ENCODE measurements at regions of chr3 and their contacts with region 1.

Region 1: DNA sequence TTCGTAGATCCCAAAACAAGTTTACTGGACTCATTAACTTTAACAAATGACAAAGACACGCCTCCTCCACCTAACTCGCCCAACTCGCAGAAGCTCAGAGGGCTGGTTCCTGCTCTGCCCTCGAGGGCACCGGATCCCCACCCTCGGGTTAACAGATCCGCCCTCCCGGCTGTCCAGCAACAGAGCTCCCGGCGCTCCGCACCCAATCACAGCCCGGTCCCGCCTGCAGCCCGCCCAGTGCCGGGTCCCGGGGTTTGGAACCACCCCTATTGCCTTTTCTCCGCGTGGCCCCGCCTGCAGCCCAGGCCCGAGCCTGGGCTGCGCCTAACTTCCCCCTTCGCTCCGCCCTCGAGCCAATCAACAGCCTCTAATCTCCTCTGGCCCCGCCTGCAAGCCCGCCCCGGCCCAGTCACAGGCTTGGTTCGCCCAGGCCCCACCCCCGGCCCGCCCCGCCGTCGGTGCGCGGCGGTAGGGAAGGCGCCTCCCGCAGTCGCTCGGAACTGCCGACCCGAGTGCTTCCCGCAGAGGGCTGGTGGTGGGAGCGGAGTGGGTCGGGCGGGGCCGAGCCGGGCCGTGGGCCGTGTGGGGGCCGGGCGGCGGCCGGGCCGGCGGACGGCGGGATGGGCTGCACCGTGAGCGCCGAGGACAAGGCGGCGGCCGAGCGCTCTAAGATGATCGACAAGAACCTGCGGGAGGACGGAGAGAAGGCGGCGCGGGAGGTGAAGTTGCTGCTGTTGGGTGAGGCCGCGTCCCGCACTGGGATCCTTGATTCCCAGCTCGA is at the start of gene GNAI2:
- DNase-seq: peak; percentile 99
- ATAC-seq: peak; percentile 87
- H3K4me3 ChIP-seq: peak within 1 kb of the TSS; percentile 78
- H3K27ac ChIP-seq: peak within 1 kb of the TSS; percentile 55; the same call in 1 of the 2 replicates
- H3K4me1 ChIP-seq: peaks cover 15% of the 10 kb centered on the region
- H3K27me3 ChIP-seq: no peaks in the 10 kb centered on the region
- CTCF ChIP-seq: no peak
- total RNA-seq, gene GNAI2: 221 and 254 TPM in 2 replicates

Region 2: GRCh38 chr3:49295489-49296058 is 940.3 kb before region 1 on chr3:
- CTCF ChIA-PET with region 1: no interaction called
- POLR2A ChIA-PET with region 1: no interaction called
- intact Hi-C with region 1: no loop called
- DNase-seq: peak; percentile 65
- ATAC-seq: peak; percentile 31; the same call in 1 of the 2 replicates
- H3K4me3 ChIP-seq: no peak overlapping the region
- H3K27ac ChIP-seq: no peak overlapping the region
- H3K4me1 ChIP-seq: no peaks in the 10 kb centered on the region
- H3K27me3 ChIP-seq: no peaks in the 10 kb centered on the region
- CTCF ChIP-seq: peak; percentile 90

Region 3: GRCh38 chr3:49939858-49940666 is 295.8 kb before region 1 on chr3 and contains the start of gene RBM6:
- CTCF ChIA-PET with region 1: interaction called, 20 read pairs
- POLR2A ChIA-PET with region 1: no interaction called
- intact Hi-C with region 1: no loop called
- DNase-seq: peak; percentile 96
- ATAC-seq: peak; percentile 98
- H3K4me3 ChIP-seq: peak within 1 kb of the TSS; percentile 91
- H3K27ac ChIP-seq: peak within 1 kb of the TSS; percentile 82
- H3K4me1 ChIP-seq: peaks cover 4% of the 10 kb centered on the region
- H3K27me3 ChIP-seq: no peaks in the 10 kb centered on the region
- CTCF ChIP-seq: no peak
- total RNA-seq, gene RBM6: 64.6 and 73.5 TPM in 2 replicates

Region 4: GRCh38 chr3:50150808-50151686 is 84.9 kb before region 1 on chr3:
- CTCF ChIA-PET with region 1: no interaction called
- POLR2A ChIA-PET with region 1: no interaction called
- intact Hi-C with region 1: no loop called
- DNase-seq: no peak
- ATAC-seq: no peak
- H3K4me3 ChIP-seq: no peak overlapping the region
- H3K27ac ChIP-seq: no peak overlapping the region
- H3K4me1 ChIP-seq: peaks cover 6% of the 10 kb centered on the region; the same call in 1 of the 2 replicates
- H3K27me3 ChIP-seq: no peaks in the 10 kb centered on the region
- CTCF ChIP-seq: no peak

Region 5: DNA sequence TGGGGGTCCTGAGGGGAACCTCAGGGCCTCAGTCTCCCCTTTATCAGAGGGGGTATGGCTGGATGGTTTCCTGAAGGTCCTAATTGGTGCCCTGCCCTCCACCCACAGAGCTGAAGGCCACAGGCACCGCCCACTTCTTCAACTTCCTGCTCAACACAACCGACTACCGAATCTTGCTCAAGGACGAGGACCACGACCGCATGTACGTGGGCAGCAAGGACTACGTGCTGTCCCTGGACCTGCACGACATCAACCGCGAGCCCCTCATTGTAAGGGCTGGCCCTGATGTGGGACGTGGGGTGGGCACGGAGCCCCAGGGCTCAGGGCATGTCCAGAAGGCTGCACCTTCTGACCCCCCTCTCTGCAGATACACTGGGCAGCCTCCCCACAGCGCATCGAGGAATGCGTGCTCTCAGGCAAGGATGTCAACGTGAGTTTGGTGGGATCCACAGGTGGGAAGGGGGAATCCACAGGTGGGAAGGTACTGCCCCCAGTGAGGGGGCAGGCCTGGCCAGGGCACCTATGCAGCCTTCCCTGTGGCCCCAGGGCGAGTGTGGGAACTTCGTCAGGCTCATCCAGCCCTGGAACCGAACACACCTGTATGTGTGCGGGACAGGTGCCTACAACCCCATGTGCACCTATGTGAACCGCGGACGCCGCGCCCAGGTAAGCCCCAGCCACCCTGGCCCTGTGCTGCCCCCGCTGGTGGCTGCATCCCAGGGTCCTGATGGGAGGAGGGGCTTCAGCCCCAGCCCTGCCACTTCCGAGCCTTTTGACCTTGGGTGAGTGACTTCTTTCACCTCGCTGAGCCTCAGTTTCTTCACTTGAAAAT is 62.0 kb before region 1 on chr3:
- CTCF ChIA-PET with region 1: no interaction called
- POLR2A ChIA-PET with region 1: no interaction called
- intact Hi-C with region 1: no loop called
- DNase-seq: no peak
- ATAC-seq: no peak
- H3K4me3 ChIP-seq: no peak overlapping the region
- H3K27ac ChIP-seq: no peak overlapping the region
- H3K4me1 ChIP-seq: peaks cover 40% of the 10 kb centered on the region
- H3K27me3 ChIP-seq: no peaks in the 10 kb centered on the region
- CTCF ChIP-seq: 0 out of 2 replicates have a peak, but pooled peaks have one; percentile 36

Region 6: DNA sequence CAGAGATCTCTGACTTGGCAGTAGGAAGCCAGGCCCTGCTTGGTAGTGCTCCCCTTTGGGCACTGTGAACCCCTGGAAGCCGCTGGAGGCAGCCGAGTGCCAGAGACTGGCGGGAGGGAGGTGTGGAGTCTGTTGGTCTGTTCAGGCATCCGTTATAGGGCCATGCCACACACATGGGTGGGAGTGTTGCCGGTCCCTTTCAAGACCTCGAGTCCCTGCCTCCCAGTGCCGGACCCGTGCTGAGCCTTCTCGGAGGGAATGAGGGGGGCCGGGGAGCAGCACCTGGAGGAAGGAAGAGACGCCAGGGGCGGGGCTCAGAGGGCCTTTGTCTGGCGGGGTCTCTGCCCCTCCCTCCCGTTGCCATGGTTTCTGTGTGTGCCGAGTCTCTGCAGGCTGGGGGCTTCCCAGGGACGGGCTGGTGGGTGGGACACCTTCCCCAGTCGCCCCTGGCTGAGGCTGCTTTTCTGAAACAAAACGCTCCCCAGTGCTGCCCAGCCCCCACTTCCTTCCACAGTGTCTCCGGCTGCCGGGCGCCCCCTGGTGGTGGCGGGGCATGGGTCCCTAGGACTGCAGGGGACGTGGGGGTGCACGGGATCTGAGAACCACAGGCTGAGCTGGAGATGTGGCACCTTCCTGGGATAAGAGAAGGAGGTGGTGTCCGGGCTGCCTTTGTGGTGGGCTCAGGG is 10.1 kb after region 1 on chr3:
- CTCF ChIA-PET with region 1: interaction called, 19 read pairs
- POLR2A ChIA-PET with region 1: interaction called, 9 read pairs
- intact Hi-C with region 1: no loop called
- DNase-seq: peak; percentile 89
- ATAC-seq: peak; percentile 74
- H3K4me3 ChIP-seq: peak overlapping the region; percentile 37; the same call in 1 of the 2 replicates
- H3K27ac ChIP-seq: peak overlapping the region; percentile 78
- H3K4me1 ChIP-seq: peaks cover 49% of the 10 kb centered on the region
- H3K27me3 ChIP-seq: no peaks in the 10 kb centered on the region
- CTCF ChIP-seq: peak; percentile 99

Region 7: GRCh38 chr3:50298836-50299637 is 63.1 kb after region 1 on chr3 and contains the starts of genes HYAL3 and NAA80:
- CTCF ChIA-PET with region 1: no interaction called
- POLR2A ChIA-PET with region 1: no interaction called
- intact Hi-C with region 1: loop called (anchors 2 kb)
- DNase-seq: peak; percentile 99
- ATAC-seq: peak; percentile 86
- H3K4me3 ChIP-seq: peak within 1 kb of the TSS; percentile 94
- H3K27ac ChIP-seq: peak within 1 kb of the TSS; percentile 90
- H3K4me1 ChIP-seq: peaks cover 20% of the 10 kb centered on the region
- H3K27me3 ChIP-seq: no peaks in the 10 kb centered on the region
- CTCF ChIP-seq: peak; percentile 36; the same call in 1 of the 2 replicates
- total RNA-seq, gene HYAL3: 13.2 and 20.8 TPM in 2 replicates
- total RNA-seq, gene NAA80: 8.7 and 16.6 TPM in 2 replicates

Region 8: DNA sequence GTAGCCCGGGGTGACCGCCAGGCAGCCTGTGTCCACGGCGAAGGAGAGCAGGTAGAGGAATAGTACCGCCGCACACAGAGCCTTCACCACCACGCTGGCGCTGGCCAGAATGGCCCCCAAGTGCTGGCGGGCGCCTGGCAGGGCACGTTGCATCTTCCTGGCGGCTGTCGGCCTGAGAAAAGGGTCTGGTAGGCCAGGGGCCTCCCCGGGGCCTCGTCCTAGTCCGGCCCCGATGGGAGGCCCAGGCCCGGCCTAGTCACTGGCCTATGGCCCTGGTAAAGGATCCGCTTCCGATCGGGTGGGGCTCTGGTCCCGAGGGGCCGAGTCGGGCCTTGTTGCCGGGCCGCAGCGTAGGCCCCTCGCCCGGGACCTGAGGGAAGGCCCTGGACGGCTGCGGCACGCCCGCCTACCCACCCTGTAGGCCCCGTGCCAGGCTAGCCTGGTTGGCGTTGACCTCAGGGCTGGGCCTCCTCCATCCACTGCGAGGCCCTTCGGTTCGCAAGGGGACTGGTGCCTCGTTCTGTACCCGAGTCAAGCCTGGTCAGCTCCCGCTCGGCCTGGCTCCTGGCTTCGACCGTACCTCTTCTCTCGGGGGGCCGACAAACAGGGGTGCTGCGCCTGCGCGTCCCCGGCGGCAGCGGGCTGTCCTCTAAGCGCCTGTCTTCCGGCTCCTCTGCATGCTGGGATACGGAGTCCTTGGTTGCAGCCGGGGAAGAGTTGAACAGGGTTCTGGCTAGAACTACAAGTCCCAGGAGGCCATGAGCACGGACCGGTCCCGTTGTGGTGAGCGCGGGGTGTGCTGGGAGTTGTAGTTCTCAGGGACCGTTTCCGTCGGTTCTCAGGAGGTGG is 123.2 kb after region 1 on chr3 and contains the start of gene TMEM115:
- CTCF ChIA-PET with region 1: no interaction called
- POLR2A ChIA-PET with region 1: no interaction called
- intact Hi-C with region 1: loop called (anchors 1 kb)
- DNase-seq: peak; percentile 98
- ATAC-seq: peak; percentile 96
- H3K4me3 ChIP-seq: peak within 1 kb of the TSS; percentile 85
- H3K27ac ChIP-seq: peak within 1 kb of the TSS; percentile 39
- H3K4me1 ChIP-seq: peaks cover 32% of the 10 kb centered on the region
- H3K27me3 ChIP-seq: no peaks in the 10 kb centered on the region
- CTCF ChIP-seq: no peak
- total RNA-seq, gene TMEM115: 54.9 and 56.6 TPM in 2 replicates

Measured in PC-3 (cell line).